Heart right ventricle (tissue), 16 donors: ENCODE measurements at regions of chr5 and their contacts with region 1.

Region 1: GRCh38 chr5:116068028-116068632 is 16.7 kb upstream of the COMMD10 start:
- DNase-seq: peak in 1 of 2 donors; percentile 31
- ATAC-seq: peak in 1 of 8 donors; percentile 54
- H3K4me3 ChIP-seq: no peak overlapping the region
- H3K27ac ChIP-seq: no peak overlapping the region
- H3K4me1 ChIP-seq: peaks cover 0 to 5% (median 0%) of the 10 kb centered on the region in 9 donors
- H3K27me3 ChIP-seq: peaks cover 0 to 16% (median 5%) of the 10 kb centered on the region in 7 donors
- CTCF ChIP-seq: peak; percentile 76 to 91 (median 85)

Region 2: DNA sequence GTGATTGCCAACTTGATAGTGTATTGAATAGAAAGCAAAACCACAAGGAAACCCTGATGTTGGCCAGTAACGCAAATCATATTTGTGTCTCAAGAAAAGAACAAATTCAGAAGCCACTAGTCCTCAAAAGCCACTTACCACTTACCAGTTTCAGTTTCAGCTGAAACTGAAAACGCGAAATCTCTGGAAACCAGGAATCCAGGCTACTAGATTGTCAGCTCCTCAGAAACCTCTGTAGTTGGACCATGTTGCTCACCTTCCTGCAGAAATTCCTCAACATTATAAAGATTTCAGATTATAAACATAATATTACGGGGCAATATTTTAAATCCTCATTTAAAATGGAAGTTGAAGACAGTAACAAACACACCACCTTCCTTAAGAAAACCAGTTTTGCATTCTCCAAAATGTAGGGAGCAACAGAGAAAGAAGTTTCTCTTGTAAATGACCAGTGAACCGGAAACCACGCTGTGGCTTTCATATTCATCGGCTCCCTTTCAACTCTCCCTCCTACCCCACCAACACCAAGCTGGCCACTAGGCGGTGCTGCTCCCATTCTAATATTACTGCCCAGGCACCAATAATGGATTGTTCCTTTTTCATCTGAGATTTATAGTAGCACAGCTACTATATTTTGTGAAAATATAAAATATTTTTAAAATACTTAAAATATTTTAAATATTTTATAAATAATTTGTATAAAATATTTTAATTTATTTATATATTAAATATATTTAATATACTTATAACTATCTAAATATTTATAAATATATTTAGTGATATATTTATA is 433.6 kb before region 1 on chr5:
- intact Hi-C with region 1: loop called in 2 of 10 experiments (anchors 2 kb)
- DNase-seq: peak; percentile 86 to 88
- ATAC-seq: peak; percentile 80 to 99 (median 97)
- H3K4me3 ChIP-seq: peak overlapping the region in 8 of 10 donors; percentile 18 to 56 (median 41)
- H3K27ac ChIP-seq: peak overlapping the region; percentile 20 to 74 (median 55)
- H3K4me1 ChIP-seq: peaks cover 0 to 10% (median 6%) of the 10 kb centered on the region in 9 donors
- H3K27me3 ChIP-seq: no peaks in the 10 kb centered on the region
- CTCF ChIP-seq: peak; percentile 71 to 94 (median 91)

Region 3: GRCh38 chr5:115831163-115831768 is 236.9 kb before region 1 on chr5:
- intact Hi-C with region 1: loop called in 2 of 10 experiments (anchors 10 kb)
- DNase-seq: peak in 1 of 2 donors; percentile 17
- ATAC-seq: peak in 2 of 8 donors; percentile 42 to 49
- H3K4me3 ChIP-seq: no peak overlapping the region
- H3K27ac ChIP-seq: no peak overlapping the region
- H3K4me1 ChIP-seq: peaks cover 0 to 5% (median 0%) of the 10 kb centered on the region in 9 donors
- H3K27me3 ChIP-seq: no peaks in the 10 kb centered on the region
- CTCF ChIP-seq: peak; percentile 52 to 85 (median 78)

Region 4: DNA sequence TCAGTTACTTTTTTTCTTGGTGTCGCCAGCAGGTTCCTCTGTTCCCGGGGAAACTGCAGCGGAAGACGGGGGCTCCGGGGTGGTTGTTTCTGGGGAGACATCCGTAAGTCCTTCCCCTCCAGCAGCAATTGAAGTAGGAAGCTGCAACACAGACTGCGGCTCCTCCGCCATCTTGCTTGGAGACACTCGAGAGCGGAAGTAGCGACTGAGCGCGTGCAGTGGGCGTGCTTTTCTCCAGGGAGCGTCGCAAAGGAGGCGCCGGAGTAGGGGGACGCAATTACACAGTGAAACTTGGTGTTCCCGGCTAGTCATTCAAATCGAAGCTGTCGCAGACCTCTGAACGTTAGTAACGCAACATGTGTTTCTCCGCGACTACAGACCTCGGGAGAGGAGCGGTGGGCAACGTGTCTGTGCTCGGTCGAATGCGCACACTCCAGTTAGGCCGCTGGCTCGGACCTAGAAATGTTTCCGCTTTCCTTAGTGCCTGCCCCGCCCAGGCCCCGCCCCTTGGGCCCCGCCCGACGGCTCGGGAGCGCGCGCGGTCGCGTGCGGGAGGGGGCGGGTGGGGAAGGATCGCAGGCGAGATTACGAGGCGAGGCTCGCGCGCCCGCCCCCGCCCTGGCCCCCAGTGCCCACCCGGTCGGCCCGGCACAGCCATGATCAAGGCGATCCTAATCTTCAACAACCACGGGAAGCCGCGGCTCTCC is 226.6 kb before region 1 on chr5 and contains the starts of genes AP3S1 and ATG12:
- intact Hi-C with region 1: loop called in 4 of 10 experiments (anchors 5 to 10 kb)
- DNase-seq: peak; percentile 92
- ATAC-seq: peak; percentile 96 to 98 (median 96)
- H3K4me3 ChIP-seq: peak within 1 kb of the TSS; percentile 59 to 96 (median 90)
- H3K27ac ChIP-seq: peak within 1 kb of the TSS; percentile 83 to 98 (median 95)
- H3K4me1 ChIP-seq: peaks cover 4 to 70% (median 56%) of the 10 kb centered on the region in 9 donors
- H3K27me3 ChIP-seq: no peaks in the 10 kb centered on the region
- CTCF ChIP-seq: no peak
- total RNA-seq, gene AP3S1: 31.9 to 63.0 (median 42.2) TPM
- total RNA-seq, gene ATG12: 18.0 to 29.8 (median 24.3) TPM

Region 5: DNA sequence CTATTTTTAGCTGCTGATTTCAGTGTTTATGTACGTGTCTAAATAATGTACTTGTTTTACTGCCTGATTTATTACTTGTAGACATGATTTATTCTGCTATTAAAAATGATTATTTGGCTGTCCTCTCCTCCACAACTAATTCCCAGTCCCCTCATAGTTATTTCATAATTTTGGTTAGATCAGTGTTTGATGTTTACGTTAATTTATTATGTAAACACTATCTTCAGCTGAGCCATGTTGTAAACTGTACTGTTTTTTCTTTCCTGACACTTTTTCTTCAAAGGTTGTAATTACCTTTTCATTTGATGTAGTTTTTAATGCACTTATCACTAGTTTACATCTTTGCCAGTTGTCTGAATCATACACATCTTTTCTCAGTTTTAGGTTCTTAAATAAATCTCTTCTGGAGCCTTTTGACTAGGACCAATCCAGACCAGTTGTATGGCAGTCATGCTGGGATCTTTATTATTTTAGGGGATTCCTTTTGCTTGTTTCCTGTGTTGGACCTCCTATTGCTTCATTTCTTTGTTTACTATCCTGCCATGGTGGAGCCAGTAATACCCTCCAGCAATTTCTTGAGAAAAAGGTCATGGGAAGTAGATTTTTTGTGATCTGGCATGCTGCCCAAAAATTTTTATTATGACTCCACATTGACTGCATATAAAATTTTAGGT is 210.4 kb before region 1 on chr5:
- intact Hi-C with region 1: no loop called
- DNase-seq: no peak
- ATAC-seq: peak in 1 of 8 donors; percentile 35
- H3K4me3 ChIP-seq: no peak overlapping the region
- H3K27ac ChIP-seq: peak overlapping the region in 1 of 10 donors; percentile 4
- H3K4me1 ChIP-seq: peaks cover 0 to 46% (median 34%) of the 10 kb centered on the region in 9 donors
- H3K27me3 ChIP-seq: no peaks in the 10 kb centered on the region
- CTCF ChIP-seq: no peak

Region 6: GRCh38 chr5:115888027-115888426 is 180.1 kb before region 1 on chr5:
- intact Hi-C with region 1: loop called in 2 of 10 experiments (anchors 5 to 10 kb)
- DNase-seq: no peak
- ATAC-seq: no peak
- H3K4me3 ChIP-seq: no peak overlapping the region
- H3K27ac ChIP-seq: no peak overlapping the region
- H3K4me1 ChIP-seq: no peaks in the 10 kb centered on the region
- H3K27me3 ChIP-seq: no peaks in the 10 kb centered on the region
- CTCF ChIP-seq: peak in 4 of 9 donors; percentile 25 to 40 (median 33)

Region 7: DNA sequence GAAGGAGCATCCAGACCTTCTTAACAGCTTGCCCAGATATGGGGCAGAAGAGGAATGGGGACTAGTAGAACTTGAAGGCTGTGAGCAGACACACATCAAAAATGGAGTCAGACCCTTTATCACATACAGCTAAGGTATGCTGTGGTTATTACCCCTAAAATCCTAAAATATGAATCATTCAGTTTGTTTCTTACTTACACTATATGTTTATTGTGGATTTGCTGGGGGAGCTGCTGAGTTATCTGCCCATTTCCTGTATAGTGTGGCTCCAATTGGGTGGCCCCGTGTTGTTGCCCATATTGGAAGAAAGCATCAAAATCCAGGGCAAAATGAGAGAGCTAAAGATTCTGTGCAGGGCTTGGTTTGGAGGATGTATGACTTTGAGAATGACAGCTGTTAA is 169.5 kb before region 1 on chr5:
- intact Hi-C with region 1: loop called in 1 of 10 experiments (anchors 10 kb)
- DNase-seq: no peak
- ATAC-seq: no peak
- H3K4me3 ChIP-seq: no peak overlapping the region
- H3K27ac ChIP-seq: no peak overlapping the region
- H3K4me1 ChIP-seq: no peaks in the 10 kb centered on the region
- H3K27me3 ChIP-seq: no peaks in the 10 kb centered on the region
- CTCF ChIP-seq: no peak